PC-9 (cell line): ENCODE measurements at regions of chr15 and their contacts with region 1.

Region 1: GRCh38 chr15:58521293-58521991 is 89.7 kb downstream of the LIPC start:
- DNase-seq: peak; percentile 89 to 98
- H3K4me3 ChIP-seq: peak overlapping the region; percentile 49; the same call in 1 of the 2 replicates
- H3K27ac ChIP-seq: peak overlapping the region; percentile 97
- H3K4me1 ChIP-seq: peaks cover 50% of the 10 kb centered on the region
- H3K27me3 ChIP-seq: no peaks in the 10 kb centered on the region
- CTCF ChIP-seq: no peak

Region 2: GRCh38 chr15:57198654-57199291 is 1322.7 kb before region 1 on chr15:
- CTCF ChIA-PET with region 1: no interaction called
- POLR2A ChIA-PET with region 1: no interaction called
- intact Hi-C with region 1: no loop called
- DNase-seq: no peak
- H3K4me3 ChIP-seq: no peak overlapping the region
- H3K27ac ChIP-seq: no peak overlapping the region
- H3K4me1 ChIP-seq: no peaks in the 10 kb centered on the region
- H3K27me3 ChIP-seq: no peaks in the 10 kb centered on the region
- CTCF ChIP-seq: no peak

Region 3: GRCh38 chr15:58056015-58056414 is 465.4 kb before region 1 on chr15:
- CTCF ChIA-PET with region 1: no interaction called
- POLR2A ChIA-PET with region 1: no interaction called
- intact Hi-C with region 1: no loop called
- DNase-seq: no peak
- H3K4me3 ChIP-seq: no peak overlapping the region
- H3K27ac ChIP-seq: no peak overlapping the region
- H3K4me1 ChIP-seq: no peaks in the 10 kb centered on the region
- H3K27me3 ChIP-seq: no peaks in the 10 kb centered on the region
- CTCF ChIP-seq: 0 out of 2 replicates have a peak, but pooled peaks have one; percentile 20

Region 4: DNA sequence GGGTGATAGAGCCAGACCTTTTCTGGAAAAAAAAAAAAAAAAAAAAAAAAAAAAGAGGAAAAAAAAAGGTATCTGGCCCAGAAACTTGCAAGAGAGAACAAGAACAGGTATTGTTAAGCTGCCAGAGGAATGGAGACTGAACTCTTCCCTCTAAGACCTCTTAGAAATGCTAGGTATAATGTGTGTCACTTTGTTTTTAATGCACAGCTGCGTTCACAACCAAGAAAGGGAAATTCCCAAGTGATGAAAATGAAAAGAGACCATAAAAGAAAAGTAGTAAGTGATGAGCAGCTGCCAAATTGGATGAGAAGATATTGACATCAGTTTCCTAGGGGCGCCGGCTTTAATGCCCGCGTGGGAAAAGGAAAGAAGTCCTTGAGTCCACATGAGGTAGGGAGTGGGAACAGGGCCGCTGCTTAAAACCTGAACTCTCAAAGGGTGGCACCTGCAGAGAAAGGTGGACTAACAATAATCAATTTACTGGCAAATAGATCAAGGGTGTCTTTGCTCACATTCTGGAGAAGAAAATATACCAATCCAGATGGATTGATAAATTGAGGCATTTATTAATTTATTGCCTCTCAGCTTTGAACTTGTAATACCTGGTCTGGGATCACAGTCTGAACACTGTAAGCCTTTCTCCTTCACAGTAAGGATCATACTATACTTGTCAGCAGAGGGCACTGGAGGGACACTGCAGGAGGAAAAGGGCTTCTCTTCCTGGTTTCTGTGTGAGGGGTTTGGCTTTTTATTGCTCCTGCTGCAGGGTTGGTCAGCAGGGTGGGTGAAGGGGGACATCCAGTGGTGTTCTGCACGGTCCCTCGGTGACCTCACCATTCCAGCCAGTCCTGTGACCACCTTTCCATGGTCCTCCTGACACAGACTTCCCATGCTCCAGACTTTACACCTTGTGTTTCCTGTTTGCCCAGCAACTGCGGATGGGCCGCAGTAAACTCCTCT is 251.7 kb before region 1 on chr15:
- CTCF ChIA-PET with region 1: no interaction called
- POLR2A ChIA-PET with region 1: no interaction called
- intact Hi-C with region 1: loop called (anchors 1 kb)
- DNase-seq: peak; percentile 44 to 62
- H3K4me3 ChIP-seq: no peak overlapping the region
- H3K27ac ChIP-seq: peak overlapping the region; percentile 39
- H3K4me1 ChIP-seq: peaks cover 34% of the 10 kb centered on the region
- H3K27me3 ChIP-seq: no peaks in the 10 kb centered on the region
- CTCF ChIP-seq: peak; percentile 74

Region 5: GRCh38 chr15:58475573-58476524 is 45.6 kb before region 1 on chr15:
- CTCF ChIA-PET with region 1: no interaction called
- POLR2A ChIA-PET with region 1: interaction called, 7 read pairs
- intact Hi-C with region 1: loop called (anchors 1 kb)
- DNase-seq: peak; percentile 8 to 52
- H3K4me3 ChIP-seq: no peak overlapping the region
- H3K27ac ChIP-seq: no peak overlapping the region
- H3K4me1 ChIP-seq: peaks cover 44% of the 10 kb centered on the region
- H3K27me3 ChIP-seq: no peaks in the 10 kb centered on the region
- CTCF ChIP-seq: no peak

Region 6: GRCh38 chr15:58506064-58506490 is 15.4 kb before region 1 on chr15:
- CTCF ChIA-PET with region 1: interaction called, 4 read pairs
- POLR2A ChIA-PET with region 1: interaction called, 4 read pairs
- intact Hi-C with region 1: loop called (anchors 1 kb)
- DNase-seq: peak; percentile 43 to 75
- H3K4me3 ChIP-seq: no peak overlapping the region
- H3K27ac ChIP-seq: 0 out of 2 replicates have a peak overlapping the region, but pooled peaks have one; percentile 40
- H3K4me1 ChIP-seq: peaks cover 17% of the 10 kb centered on the region
- H3K27me3 ChIP-seq: no peaks in the 10 kb centered on the region
- CTCF ChIP-seq: no peak

Region 7: DNA sequence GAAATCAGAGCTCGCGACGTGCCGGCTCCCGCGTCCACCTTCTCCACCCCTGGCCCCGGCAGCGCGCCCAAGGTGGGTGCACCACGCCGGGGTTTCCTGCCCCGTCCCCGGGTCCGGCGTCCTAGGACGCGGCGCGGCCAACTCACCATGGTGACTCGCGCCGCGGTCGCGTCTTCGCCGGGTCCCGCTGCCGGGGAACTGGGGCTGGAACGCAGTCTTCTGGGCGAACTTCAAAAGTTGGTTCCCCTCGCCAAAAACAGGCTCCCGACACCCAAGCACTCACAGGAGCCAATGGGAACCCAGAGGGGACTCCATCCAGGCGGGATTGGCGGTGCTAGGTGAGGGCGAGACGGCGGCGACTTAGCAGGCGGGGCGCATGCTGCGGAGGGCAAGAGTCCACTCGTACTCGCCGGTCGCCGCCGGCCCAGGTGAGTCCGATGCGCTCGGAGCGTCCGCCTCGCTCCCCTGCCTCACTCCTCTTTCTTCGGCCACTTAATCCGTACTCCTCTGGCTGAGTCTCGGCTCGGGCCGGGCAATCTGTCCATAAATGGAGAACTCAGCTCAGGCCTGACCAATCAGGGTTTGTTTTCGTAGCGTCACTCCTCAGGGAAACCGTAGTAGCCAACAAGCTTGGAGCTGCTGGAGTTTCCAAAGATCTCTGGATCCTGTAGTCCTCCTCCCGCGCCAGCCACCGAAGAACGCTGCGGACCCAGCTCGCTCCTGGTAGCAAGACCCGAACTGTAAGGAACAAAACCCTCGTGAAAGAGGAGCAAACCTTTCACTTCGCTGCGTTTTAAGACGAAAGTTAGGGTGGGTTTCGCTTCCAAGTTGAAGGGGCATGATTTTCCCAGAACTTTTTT is 851.1 kb after region 1 on chr15 and contains the start of gene MYO1E:
- CTCF ChIA-PET with region 1: no interaction called
- POLR2A ChIA-PET with region 1: no interaction called
- intact Hi-C with region 1: loop called (anchors 10 kb)
- DNase-seq: peak; percentile 91
- H3K4me3 ChIP-seq: peak within 1 kb of the TSS; percentile 97
- H3K27ac ChIP-seq: peak within 1 kb of the TSS; percentile 89
- H3K4me1 ChIP-seq: peaks cover 30% of the 10 kb centered on the region
- H3K27me3 ChIP-seq: no peaks in the 10 kb centered on the region
- CTCF ChIP-seq: no peak
- total RNA-seq, gene MYO1E: 156 and 213 TPM in 2 replicates